Breast epithelium (tissue), 4 donors: ENCODE measurements at regions of chr14 and their contacts with region 1.

Region 1: DNA sequence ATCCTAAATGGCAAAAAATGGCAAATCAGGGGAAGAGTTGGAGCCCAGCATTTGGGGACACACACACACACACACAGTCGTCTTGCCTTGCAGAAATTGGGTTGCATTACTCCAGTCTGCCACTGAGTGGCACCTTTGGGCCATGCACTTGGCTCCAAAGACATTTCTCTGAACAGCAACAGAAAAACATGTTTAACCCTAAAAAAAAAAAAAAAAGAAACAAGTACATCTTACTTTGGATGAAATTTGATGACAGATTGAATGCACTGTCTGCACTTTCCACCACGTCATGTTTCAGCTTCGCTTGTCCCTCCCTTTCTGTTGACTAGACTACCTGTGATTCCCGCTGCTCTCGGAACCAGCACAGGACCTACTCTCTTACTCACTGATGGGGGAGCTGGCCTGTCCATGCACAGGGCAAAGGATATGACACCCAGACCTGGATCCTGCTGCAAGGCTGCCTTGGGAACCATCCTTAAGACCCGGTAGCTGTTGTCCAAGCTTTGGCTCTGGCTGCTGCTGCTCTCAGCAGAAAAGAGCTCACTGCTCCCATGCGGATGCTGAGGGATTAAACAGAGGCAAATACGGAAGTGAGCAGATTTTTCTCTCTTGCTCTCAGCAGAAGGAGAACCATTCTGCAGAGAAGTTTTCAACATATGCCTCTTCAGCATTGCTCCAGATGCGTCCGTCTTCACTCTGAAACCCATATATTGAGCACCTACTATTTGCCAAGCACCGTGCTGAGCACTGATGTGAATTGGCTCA is 376.8 kb downstream of the DPF3 start:
- DNase-seq: peak; percentile 52 to 63
- H3K4me3 ChIP-seq: no peak overlapping the region
- H3K27ac ChIP-seq: no peak overlapping the region
- H3K4me1 ChIP-seq: no peaks in the 10 kb centered on the region
- H3K27me3 ChIP-seq: no peaks in the 10 kb centered on the region
- CTCF ChIP-seq: peak; percentile 84 to 94 (median 86)
- POLR2A ChIP-seq: no peak

Region 2: DNA sequence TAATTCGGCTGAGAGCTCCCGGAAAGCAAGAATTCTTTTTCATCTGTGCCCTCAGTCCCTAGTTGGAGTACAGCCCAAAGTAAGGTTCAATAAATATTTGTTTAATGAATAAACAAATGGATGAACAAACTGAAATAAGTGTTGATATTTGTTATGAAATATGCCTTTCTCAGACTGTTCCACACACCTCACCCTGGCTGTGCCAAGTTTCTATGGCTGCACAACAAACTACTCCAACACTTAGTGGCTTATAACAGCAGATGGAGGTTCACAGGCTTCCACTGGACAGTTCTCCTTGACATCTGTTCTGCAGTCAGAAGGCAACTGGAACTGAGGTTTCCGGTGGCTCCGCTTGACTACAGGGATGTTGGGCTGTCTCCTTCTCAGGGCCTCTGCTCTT is 387.9 kb before region 1 on chr14:
- intact Hi-C with region 1: no loop called
- DNase-seq: peak; percentile 32 to 60
- H3K4me3 ChIP-seq: no peak overlapping the region
- H3K27ac ChIP-seq: peak overlapping the region in 1 of 2 donors; percentile 0
- H3K4me1 ChIP-seq: no peaks in the 10 kb centered on the region
- H3K27me3 ChIP-seq: no peaks in the 10 kb centered on the region
- CTCF ChIP-seq: no peak
- POLR2A ChIP-seq: no peak

Region 3: DNA sequence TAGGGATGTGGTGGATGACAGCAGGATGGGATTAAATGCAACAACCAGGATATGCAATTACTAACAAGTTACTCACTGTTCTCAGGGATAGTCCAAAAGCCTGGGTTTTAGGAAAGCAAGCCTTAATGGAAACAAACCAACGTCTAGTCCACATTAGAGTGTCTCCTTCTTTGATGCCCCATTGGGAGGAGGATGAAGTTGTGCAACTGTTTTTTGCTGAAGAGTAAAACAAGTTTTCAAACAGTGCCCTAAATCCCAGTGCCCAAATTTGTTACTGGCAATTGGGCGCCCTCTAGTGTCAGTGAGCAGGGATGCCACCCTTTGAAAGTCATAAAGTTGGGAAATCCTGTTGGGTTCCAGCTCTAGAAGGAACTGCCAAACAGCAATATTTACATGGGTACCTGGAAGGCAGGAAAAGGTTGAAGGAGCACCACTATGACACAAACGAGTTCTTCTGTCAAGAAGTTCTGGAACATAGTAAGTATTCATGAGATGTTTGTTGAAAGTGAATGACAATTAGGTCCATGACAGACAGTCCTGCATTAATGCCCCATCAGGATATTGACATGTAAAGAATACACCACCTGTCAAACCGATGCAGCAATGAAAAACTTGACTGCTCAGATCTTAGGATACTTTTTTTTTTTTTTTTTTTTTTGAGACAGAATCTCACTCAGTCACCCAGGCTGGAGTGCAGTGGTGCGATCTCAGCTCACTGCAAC is 387.9 kb after region 1 on chr14:
- intact Hi-C with region 1: loop called (anchors 5 kb)
- DNase-seq: peak in 1 of 2 donors; percentile 65
- H3K4me3 ChIP-seq: no peak overlapping the region
- H3K27ac ChIP-seq: no peak overlapping the region
- H3K4me1 ChIP-seq: no peaks in the 10 kb centered on the region
- H3K27me3 ChIP-seq: no peaks in the 10 kb centered on the region
- CTCF ChIP-seq: peak; percentile 93 to 98 (median 96)
- POLR2A ChIP-seq: no peak